Breast epithelium (tissue), 4 donors: ENCODE measurements at regions of chr2 and their contacts with region 1.

Region 1: DNA sequence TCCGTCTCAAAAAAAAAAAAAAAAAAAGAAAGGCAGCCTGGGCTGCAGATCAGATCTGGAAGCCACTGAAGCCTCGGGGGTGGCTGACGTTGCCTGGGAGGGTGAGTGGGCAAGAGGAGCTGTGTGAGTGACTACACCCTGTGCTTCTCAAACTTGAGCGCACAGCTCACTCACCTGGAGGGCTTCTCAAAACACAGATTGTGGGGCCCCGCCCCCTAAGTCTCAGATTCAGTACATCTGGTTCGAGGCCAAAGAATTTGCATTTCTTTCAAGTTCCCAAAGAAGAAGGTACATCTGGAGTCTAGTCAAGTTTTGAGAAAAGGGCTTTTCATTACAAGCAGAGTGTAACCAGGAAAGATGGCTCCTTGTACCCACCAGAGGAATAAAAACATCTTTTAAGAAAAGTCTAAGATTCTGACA is 97.7 kb upstream of the CAB39 start:
- DNase-seq: no peak
- H3K4me3 ChIP-seq: no peak overlapping the region
- H3K27ac ChIP-seq: no peak overlapping the region
- H3K4me1 ChIP-seq: no peaks in the 10 kb centered on the region
- H3K27me3 ChIP-seq: no peaks in the 10 kb centered on the region
- CTCF ChIP-seq: no peak
- POLR2A ChIP-seq: no peak

Region 2: DNA sequence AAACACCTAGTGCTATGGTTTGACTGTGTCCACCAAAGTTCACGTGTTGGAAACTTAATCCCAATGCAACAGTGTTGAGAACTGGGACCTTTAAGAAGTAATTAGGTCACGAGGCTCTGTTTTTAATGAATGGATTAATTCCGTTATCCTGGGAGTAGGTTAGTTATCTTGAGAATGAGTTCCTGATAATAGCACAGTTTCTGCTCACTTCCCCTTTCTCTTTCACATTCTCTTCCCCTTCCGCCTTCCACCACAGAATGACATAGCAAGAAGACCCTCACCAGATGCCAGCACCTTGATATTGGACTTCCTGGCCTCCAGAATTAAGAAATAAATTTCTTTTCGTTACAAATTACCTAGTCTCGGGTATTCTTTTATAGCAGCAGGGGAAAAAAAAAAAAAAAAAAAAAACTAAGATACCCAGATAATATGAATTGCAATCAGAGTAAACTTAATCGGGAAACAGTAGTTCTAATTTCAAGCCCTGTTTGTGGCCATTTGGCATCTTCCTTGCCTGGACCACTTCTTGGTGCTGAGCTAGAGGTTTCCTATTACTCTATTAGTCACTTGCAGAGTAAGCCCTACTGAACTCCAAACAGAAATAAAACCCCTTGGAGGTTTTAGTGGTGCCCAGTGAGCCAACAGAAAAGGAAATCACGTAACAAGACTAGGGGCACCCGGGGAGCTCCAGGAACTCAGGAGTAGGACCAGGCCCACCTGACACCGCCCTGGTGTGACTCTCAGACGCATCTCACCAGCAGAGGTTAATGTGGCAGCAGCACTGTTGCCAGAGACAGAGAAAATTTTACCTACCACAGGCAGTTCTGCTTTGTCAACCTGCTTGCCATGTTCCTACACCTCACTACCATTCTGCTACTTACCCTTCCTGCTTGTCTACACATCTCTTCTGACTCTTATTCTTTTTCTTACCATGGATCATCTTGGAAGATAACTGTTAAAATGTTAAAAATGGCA is 49.8 kb before region 1 on chr2:
- intact Hi-C with region 1: no loop called
- DNase-seq: no peak
- H3K4me3 ChIP-seq: no peak overlapping the region
- H3K27ac ChIP-seq: no peak overlapping the region
- H3K4me1 ChIP-seq: no peaks in the 10 kb centered on the region
- H3K27me3 ChIP-seq: no peaks in the 10 kb centered on the region
- CTCF ChIP-seq: no peak
- POLR2A ChIP-seq: no peak

Region 3: GRCh38 chr2:231425811-231426728 is 811.1 kb after region 1 on chr2:
- intact Hi-C with region 1: loop called (anchors 10 kb)
- DNase-seq: no peak
- H3K4me3 ChIP-seq: no peak overlapping the region
- H3K27ac ChIP-seq: no peak overlapping the region
- H3K4me1 ChIP-seq: no peaks in the 10 kb centered on the region
- H3K27me3 ChIP-seq: no peaks in the 10 kb centered on the region
- CTCF ChIP-seq: no peak
- POLR2A ChIP-seq: no peak